ENCODE measurements at regions of chr2 and their contacts with region 1.

Region 1: DNA sequence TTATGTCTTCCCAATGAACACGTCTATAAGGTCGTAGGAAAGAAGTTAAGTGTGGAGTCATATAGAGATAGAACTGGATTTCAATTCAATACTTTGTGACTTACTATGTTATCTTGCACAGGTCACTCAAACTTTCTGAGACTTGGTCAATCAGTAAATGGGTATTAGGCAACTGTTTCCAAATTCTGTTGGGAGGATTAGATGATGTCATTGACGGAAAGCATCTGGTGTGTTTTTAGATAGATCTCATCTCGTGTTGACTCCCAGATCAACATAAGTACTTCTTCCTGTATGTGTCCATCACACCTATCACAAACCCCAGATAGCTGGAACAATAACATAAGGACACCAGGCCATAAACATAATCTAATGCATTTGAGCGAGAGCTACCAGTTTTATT is 771.1 kb upstream of the FANCL start:
- DNase-seq: no peak
- H3K4me3 ChIP-seq: no peak overlapping the region
- H3K27me3 ChIP-seq: no peaks in the 10 kb centered on the region
- CTCF ChIP-seq: no peak

Region 2: GRCh38 chr2:57726294-57726693 is 1286.0 kb before region 1 on chr2:
- CTCF ChIA-PET with region 1: no interaction called
- POLR2A ChIA-PET with region 1: no interaction called
- DNase-seq: no peak
- H3K4me3 ChIP-seq: no peak overlapping the region
- H3K27me3 ChIP-seq: no peaks in the 10 kb centered on the region
- CTCF ChIP-seq: no peak

Region 3: GRCh38 chr2:59025157-59025757 is 13.0 kb after region 1 on chr2:
- CTCF ChIA-PET with region 1: interaction called, 19 read pairs
- POLR2A ChIA-PET with region 1: no interaction called
- DNase-seq: no peak
- H3K4me3 ChIP-seq: no peak overlapping the region
- H3K27me3 ChIP-seq: no peaks in the 10 kb centered on the region
- CTCF ChIP-seq: peak; percentile 82